ENCODE measurements at regions of chrX and their contacts with region 1.

Region 1: DNA sequence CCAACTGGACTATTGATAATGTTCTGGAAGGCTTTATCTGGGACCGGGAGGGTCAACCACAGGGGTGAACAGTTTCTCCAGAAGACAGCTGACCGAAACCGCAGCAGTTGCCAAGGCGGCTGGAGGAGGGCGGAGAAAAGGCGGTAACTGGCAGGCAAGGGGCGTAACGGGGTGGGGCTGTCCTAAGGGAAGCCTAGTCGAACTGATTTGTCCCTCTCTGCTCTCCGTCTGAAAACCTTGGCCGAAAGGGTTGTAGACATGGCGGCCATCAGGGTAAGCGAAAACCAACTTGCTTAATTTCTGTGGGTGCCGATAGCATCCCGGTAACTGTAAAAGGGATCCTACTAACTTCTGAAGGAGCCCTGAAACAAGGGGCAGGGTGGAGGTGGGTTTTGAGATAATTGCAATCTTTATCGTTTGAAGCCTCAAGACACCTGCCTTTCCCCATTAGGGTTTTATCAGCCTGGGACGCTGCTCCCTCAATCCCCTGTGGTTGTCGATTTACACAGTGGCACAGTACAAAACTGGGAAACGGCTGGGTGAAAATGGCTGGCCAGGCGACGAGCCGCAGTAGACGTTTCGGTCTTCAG is at the start of gene APOOL:
- DNase-seq: peak; percentile 88
- H3K4me3 Mint-ChIP-seq: peak within 1 kb of the TSS; percentile 84
- H3K27ac Mint-ChIP-seq: peak within 1 kb of the TSS; percentile 71
- H3K4me1 Mint-ChIP-seq: peaks cover 14% of the 10 kb centered on the region
- H3K27me3 Mint-ChIP-seq: no peaks in the 10 kb centered on the region
- total RNA-seq, gene APOOL: 23.3 to 24.1 TPM

Region 2: GRCh38 chrX:86047174-86047935 is 1043.6 kb after region 1 on chrX and contains the start of gene CHM:
- CTCF ChIA-PET with region 1: no interaction called
- intact Hi-C with region 1: loop called (anchors 2 kb)
- DNase-seq: peak; percentile 70
- H3K4me3 Mint-ChIP-seq: peak within 1 kb of the TSS; percentile 43
- H3K27ac Mint-ChIP-seq: no peak within 1 kb of the TSS
- H3K4me1 Mint-ChIP-seq: peaks cover 13% of the 10 kb centered on the region
- H3K27me3 Mint-ChIP-seq: no peaks in the 10 kb centered on the region
- total RNA-seq, gene CHM: 9.9 to 13.6 TPM